Left cardiac atrium (tissue), 4 donors: ENCODE measurements at regions of chr17 and their contacts with region 1.

Region 1: GRCh38 chr17:4215882-4216570 is 47.8 kb downstream of the ANKFY1 start:
- DNase-seq: no peak
- ATAC-seq: no peak

Region 2: DNA sequence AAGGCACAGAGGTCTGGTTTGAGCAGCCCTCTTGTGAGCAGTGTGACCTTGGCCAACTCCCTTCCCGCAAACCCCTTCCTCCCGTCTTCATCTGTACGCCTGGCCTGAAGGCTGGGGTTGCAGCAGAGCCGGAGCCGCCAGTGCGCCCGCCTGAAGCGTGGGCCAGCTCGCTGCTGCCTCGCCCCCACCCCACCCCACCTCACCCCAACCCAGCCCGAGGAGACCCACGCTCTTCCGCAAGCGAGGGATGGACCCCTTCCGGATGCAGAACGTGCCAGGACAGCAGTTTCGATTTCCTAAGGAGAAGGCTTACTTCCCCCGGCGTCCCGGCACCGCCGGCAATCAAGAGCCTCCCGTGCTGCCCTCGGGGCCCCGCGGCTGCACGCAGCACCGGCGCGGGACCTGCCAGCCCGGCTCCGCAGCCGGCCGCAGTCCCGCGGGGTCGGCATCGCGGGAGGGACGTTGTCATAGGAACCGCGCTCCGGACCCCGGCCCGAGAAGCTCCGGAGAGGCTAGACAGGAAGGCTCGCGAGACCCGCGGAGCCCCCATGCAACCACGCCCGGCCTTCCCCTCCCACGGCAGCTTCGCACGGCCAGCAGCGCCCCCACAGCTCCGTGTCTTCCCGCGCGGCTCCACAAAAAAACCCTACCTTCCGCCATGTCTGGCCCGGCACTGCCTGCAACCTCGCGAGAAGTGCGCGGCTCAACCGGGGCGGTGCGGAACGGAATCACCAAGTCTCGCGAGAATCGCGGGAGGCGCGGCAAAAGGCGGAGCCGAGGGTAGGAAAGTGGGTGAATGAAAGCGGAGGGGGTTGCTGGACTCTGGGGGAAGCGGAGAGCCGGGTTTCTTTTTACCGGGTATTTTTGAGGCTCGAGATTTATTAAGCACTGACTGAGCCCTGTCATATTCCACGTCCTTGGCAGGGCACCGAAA is 47.5 kb after region 1 on chr17 and contains the start of gene ANKFY1:
- intact Hi-C with region 1: loop called in 1 of 2 experiments (anchors 10 kb)
- DNase-seq: peak; percentile 97
- ATAC-seq: peak; percentile 98 to 99
- total RNA-seq, gene ANKFY1: 23.2 to 24.0 TPM

Region 3: DNA sequence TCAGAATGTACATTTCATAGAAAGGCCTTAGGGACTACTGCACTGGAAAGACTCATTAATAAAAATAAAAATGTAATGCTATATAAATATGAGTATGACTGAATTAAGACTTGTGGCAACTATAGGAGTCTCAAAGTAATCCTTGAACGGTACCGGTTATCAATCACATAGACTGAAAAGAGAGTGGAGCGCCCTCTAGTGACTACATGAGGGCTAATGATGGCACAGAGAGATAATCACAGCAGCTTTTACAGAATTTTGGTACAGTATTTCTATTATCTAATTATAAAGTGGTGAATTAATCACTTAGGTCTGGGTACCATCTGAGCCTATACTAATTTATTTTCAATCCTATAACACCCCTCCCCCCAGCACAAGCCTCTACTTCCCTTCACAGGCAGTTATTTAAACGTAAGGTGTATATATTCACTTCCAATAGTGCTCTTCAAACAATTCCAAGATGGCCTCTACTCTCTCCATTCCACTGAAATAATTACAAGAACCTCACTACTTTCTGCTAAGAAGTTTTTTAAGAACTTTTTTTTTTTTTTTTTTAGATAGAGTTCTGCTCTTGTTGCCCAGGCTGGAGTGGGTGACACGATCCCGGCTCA is 88.5 kb after region 1 on chr17:
- intact Hi-C with region 1: loop called in 1 of 2 experiments (anchors 5 kb)
- DNase-seq: peak; percentile 32
- ATAC-seq: peak; percentile 60 to 63

Region 4: GRCh38 chr17:4397840-4398239 is 181.8 kb after region 1 on chr17:
- intact Hi-C with region 1: no loop called
- DNase-seq: no peak
- ATAC-seq: no peak

Region 5: GRCh38 chr17:4412933-4413831 is 197.2 kb after region 1 on chr17:
- intact Hi-C with region 1: loop called (anchors 1 to 5 kb)
- DNase-seq: peak; percentile 94
- ATAC-seq: peak; percentile 98 to 99